ENCODE measurements at regions of chr16 and their contacts with region 1.

Region 1: DNA sequence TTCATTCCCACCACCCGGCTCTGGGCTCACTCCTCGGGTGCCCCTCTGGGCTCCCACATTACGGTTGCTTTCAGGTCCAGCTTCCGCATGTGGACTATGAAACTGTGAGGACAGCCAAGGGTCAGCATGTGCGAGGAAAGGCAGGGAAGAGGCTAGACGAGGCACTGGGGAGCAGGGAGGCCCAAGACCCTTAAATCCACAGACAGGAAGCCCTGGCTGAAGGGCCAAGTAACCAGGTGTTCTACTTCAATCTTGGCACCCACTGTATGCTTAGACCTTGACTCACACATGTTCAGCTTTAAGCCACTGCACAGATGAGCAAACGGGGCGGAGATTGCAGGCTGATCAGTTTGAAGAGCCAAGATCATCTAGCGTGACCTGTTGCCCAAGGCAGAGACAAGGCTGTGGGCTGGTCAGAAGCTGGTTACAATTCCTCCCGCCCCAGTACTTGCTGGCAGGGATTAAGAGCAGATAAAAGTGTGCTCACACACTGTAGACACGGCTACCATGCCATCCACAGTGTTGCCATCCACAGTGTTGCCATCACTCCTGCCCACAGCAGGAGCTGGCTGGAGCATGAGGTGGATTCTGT is at the start of gene CES4A:
- DNase-seq: no peak
- H3K4me3 Mint-ChIP-seq: peak within 1 kb of the TSS; percentile 61
- H3K27ac Mint-ChIP-seq: peak within 1 kb of the TSS; percentile 88
- H3K4me1 Mint-ChIP-seq: peaks cover 40% of the 10 kb centered on the region
- H3K27me3 Mint-ChIP-seq: no peaks in the 10 kb centered on the region
- total RNA-seq, gene CES4A: 29.8 and 30.1 TPM in 2 replicates

Region 2: GRCh38 chr16:66070140-66070917 is 918.0 kb before region 1 on chr16:
- intact Hi-C with region 1: no loop called
- DNase-seq: no peak
- H3K4me3 Mint-ChIP-seq: no peak overlapping the region
- H3K27ac Mint-ChIP-seq: no peak overlapping the region
- H3K4me1 Mint-ChIP-seq: no peaks in the 10 kb centered on the region
- H3K27me3 Mint-ChIP-seq: peaks cover 1% of the 10 kb centered on the region

Region 3: DNA sequence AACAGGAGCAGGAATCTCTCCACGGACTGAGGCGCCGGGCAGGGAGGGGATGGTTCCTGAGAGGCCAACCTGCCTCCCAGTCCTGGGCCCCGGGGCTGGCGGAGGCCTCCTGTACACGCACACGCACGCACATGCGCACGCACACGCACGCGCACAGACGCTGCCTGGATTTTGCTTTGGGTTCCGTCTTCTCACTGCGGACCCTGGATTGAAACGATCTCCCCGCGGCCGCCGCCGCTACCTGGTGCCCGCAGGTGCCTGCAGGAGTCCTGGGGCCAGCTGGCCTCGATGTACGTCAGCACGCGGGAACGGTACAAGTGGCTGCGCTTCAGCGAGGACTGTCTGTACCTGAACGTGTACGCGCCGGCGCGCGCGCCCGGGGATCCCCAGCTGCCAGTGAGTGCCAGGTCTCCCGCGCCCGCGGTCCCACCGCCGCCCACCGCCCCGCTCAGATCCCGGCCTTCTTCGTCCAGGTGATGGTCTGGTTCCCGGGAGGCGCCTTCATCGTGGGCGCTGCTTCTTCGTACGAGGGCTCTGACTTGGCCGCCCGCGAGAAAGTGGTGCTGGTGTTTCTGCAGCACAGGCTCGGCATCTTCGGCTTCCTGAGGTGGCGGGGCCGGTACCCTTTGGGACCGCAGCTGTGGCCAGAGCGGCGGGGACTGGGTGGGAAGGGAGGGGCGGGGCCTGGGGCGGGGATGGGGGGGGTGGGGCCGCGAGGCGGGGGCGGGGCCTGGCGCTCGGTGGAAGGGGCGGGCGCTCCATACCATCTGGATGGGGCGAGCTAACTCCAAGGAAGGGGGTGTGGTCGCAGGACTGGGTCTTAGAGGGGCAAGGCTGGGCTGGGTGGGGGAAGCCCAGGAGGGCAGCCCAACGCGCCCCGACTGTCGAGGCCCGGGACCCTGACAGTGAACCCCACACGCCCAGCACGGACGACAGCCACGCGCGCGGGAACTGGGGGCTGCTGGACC is 12.4 kb after region 1 on chr16:
- intact Hi-C with region 1: loop called (anchors 2 kb)
- DNase-seq: peak; percentile 52
- H3K4me3 Mint-ChIP-seq: peak overlapping the region; percentile 83
- H3K27ac Mint-ChIP-seq: peak overlapping the region; percentile 84
- H3K4me1 Mint-ChIP-seq: peaks cover 29% of the 10 kb centered on the region
- H3K27me3 Mint-ChIP-seq: no peaks in the 10 kb centered on the region

Region 4: GRCh38 chr16:67028555-67029248 is 40.4 kb after region 1 on chr16 and contains the start of gene CBFB:
- intact Hi-C with region 1: loop called (anchors 1 kb)
- DNase-seq: peak; percentile 95
- H3K4me3 Mint-ChIP-seq: peak within 1 kb of the TSS; percentile 92
- H3K27ac Mint-ChIP-seq: peak within 1 kb of the TSS; percentile 92
- H3K4me1 Mint-ChIP-seq: peaks cover 46% of the 10 kb centered on the region
- H3K27me3 Mint-ChIP-seq: no peaks in the 10 kb centered on the region
- total RNA-seq, gene CBFB: 156 and 159 TPM in 2 replicates

Measured in activated T-helper 2 cell treated with anti-CD3 and anti-CD28 coated beads, Interferon-gamma antibody, Interleukin-2, Interleukin-4, amounts not matched to agents 10 μg/mL and 5 μg/mL and 100 μg/mL, durations not matched to agents 14 hours and 24 hours and 36 hours (primary cell).